Heart left ventricle (tissue), 16 donors: ENCODE measurements at regions of chr6 and their contacts with region 1.

Region 1: DNA sequence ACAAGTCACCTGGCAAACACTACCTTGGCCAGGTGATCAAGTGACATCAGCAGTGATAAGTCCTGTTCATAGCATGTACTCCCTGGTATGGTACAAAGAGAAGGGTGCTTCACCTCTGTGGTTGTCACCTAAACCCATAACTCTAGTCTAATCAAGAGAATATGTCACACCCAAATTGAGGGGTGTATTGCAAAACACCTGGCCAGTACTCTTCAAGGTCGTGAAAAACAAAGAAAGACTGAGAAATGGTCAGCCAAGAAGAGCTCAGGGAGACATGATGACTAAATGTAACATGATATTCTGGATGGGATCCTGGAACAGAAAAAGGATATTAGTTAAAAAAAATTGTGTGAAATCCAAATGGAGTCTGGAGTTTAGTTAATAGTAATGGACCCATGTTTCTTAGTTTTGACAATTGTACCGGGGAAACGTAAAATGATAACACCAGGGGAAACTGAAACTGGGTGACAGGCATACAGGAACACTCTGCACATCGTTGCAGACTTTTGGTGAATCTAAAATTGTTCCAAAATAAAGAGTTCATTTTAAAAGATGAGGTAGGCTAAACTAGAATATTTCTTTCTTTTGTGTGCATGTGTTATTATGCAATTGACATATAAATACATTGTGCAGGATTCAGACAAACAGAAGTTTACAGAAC is 262.0 kb downstream of the CDC5L start:
- DNase-seq: no peak
- ATAC-seq: peak in 1 of 4 donors; percentile 10
- H3K4me3 ChIP-seq: no peak overlapping the region
- H3K27ac ChIP-seq: no peak overlapping the region
- H3K4me1 ChIP-seq: peaks cover 0 to 3% (median 0%) of the 10 kb centered on the region in 12 donors
- H3K27me3 ChIP-seq: peaks cover 0 to 10% (median 0%) of the 10 kb centered on the region in 9 donors
- CTCF ChIP-seq: no peak
- POLR2A ChIP-seq: no peak

Region 2: DNA sequence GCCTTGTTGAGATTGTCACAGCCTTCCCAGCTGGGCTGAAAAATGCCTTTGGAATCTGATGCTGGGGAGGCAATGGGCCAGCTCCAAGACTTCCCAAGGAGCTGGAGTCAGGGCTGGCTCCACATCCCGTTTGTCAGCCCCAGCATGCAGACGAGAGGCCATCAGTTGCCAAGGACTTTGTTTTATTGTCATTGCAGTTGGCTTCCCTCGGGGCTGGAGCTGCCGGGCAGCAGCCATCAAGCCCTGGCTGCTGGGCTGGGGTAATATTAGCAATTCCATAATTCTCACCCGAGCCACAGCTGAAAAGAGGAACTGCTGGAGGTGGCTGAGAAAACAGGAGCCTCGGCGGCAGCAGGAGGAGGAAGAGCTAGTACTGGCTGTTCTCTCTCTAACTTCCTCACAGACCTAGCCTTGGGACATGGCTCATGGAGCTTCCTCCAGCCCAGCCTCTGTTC is 79.5 kb before region 1 on chr6:
- intact Hi-C with region 1: no loop called
- DNase-seq: peak; percentile 46 to 71 (median 66)
- ATAC-seq: peak; percentile 85 to 91 (median 90)
- H3K4me3 ChIP-seq: peak overlapping the region in 1 of 12 donors; percentile 18
- H3K27ac ChIP-seq: peak overlapping the region in 11 of 12 donors; percentile 37 to 79 (median 69)
- H3K4me1 ChIP-seq: peaks cover 0 to 27% (median 14%) of the 10 kb centered on the region in 12 donors
- H3K27me3 ChIP-seq: no peaks in the 10 kb centered on the region
- CTCF ChIP-seq: no peak
- POLR2A ChIP-seq: no peak

Region 3: GRCh38 chr6:45714741-45715507 is 1065.4 kb after region 1 on chr6:
- intact Hi-C with region 1: loop called in 3 of 10 experiments (anchors 2 to 5 kb)
- DNase-seq: peak in 3 of 5 donors; percentile 33 to 54 (median 42)
- ATAC-seq: peak; percentile 85 to 94 (median 94)
- H3K4me3 ChIP-seq: peak overlapping the region in 3 of 12 donors; percentile 12 to 23 (median 22)
- H3K27ac ChIP-seq: no peak overlapping the region
- H3K4me1 ChIP-seq: peaks cover 0 to 15% (median 1%) of the 10 kb centered on the region in 12 donors
- H3K27me3 ChIP-seq: no peaks in the 10 kb centered on the region
- CTCF ChIP-seq: peak; percentile 66 to 88 (median 80)
- POLR2A ChIP-seq: no peak

Region 4: DNA sequence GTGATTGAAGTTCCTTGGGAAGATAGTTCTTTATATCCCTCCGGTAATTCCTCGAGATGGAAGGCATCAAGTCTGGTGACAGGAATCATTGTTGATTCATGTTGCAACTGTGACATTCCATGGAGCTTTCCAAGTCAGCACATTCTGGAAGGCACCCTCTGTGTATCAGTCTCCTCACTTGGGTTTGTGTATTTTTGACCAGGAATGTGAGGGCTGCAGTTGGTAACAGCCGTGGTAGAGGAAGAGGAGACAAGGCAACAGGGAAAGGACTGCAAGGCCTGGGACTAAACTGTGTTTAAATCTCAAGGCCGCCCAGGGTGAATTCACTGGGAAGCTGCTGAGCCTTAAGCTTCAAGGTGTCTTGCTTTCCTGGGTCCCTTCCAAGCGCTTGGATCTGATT is 1267.2 kb after region 1 on chr6:
- intact Hi-C with region 1: loop called in 7 of 10 experiments (anchors 5 to 10 kb)
- DNase-seq: no peak
- ATAC-seq: peak; percentile 47 to 68 (median 60)
- H3K4me3 ChIP-seq: no peak overlapping the region
- H3K27ac ChIP-seq: peak overlapping the region in 9 of 12 donors; percentile 28 to 67 (median 33)
- H3K4me1 ChIP-seq: peaks cover 0 to 36% (median 7%) of the 10 kb centered on the region in 12 donors
- H3K27me3 ChIP-seq: no peaks in the 10 kb centered on the region
- CTCF ChIP-seq: no peak
- POLR2A ChIP-seq: no peak

Region 5: DNA sequence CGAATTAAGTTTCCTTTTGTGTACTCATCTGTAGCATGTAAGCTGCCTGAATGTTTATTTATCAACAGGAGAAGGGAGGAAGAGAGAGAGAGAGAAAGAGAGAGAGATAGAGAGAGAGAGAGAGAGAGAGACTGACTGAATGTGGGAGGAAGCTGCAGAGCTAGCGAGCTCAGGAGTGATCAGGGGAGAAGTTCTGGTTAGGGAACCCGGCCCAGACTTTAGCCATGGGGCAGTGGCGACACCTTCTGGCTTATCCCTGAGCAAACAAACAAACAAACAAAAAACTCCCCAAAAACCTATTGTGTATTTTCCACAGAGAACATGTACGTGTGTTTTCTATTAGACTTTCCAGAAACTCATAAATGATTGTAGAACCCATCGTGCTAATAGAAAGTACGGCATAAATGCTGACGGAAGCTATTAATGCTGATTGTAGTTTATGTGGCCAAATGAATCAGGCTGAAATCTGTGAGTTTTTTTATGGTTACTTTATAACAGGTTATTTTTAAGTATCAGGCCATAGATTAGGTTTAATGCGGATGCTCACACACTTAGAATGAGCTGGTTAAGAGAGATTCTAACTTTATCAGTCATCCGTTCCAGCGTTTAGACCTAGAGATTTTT is 1273.3 kb after region 1 on chr6:
- intact Hi-C with region 1: loop called in 7 of 10 experiments (anchors 5 to 10 kb)
- DNase-seq: peak; percentile 58 to 72 (median 62)
- ATAC-seq: peak; percentile 51 to 75 (median 73)
- H3K4me3 ChIP-seq: no peak overlapping the region
- H3K27ac ChIP-seq: peak overlapping the region in 1 of 12 donors; percentile 24
- H3K4me1 ChIP-seq: peaks cover 0 to 58% (median 29%) of the 10 kb centered on the region in 12 donors
- H3K27me3 ChIP-seq: no peaks in the 10 kb centered on the region
- CTCF ChIP-seq: peak; percentile 30 to 71 (median 60)
- POLR2A ChIP-seq: no peak